ENCODE measurements at regions of chr18 and their contacts with region 1.

Region 1: DNA sequence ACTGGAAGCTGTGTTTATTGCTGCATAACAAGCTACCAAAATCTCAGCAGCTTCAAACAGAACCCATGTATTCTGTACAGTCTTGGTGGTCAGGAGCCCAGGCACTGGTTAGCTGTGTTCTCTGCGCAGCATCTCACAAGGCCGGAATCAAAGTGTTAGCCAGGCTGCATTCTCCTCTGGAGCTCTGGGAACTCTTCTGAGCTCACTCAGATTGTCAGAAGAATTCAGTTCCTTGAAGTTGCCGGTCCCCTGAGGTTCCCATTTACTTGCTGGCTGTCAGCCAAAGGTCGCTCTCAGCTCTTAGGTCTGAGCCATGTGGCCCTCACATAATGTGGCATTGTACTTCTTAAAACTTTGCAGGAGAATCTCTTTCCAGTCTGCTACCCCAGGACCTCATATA is 123.6 kb upstream of the SMIM21 start:
- DNase-seq: no peak
- ATAC-seq: no peak
- H3K4me3 ChIP-seq: no peak overlapping the region
- H3K27ac ChIP-seq: no peak overlapping the region
- H3K4me1 ChIP-seq: no peaks in the 10 kb centered on the region
- H3K27me3 ChIP-seq: peaks cover 0 to 2% of the 10 kb centered on the region in 2 donors

Region 2: DNA sequence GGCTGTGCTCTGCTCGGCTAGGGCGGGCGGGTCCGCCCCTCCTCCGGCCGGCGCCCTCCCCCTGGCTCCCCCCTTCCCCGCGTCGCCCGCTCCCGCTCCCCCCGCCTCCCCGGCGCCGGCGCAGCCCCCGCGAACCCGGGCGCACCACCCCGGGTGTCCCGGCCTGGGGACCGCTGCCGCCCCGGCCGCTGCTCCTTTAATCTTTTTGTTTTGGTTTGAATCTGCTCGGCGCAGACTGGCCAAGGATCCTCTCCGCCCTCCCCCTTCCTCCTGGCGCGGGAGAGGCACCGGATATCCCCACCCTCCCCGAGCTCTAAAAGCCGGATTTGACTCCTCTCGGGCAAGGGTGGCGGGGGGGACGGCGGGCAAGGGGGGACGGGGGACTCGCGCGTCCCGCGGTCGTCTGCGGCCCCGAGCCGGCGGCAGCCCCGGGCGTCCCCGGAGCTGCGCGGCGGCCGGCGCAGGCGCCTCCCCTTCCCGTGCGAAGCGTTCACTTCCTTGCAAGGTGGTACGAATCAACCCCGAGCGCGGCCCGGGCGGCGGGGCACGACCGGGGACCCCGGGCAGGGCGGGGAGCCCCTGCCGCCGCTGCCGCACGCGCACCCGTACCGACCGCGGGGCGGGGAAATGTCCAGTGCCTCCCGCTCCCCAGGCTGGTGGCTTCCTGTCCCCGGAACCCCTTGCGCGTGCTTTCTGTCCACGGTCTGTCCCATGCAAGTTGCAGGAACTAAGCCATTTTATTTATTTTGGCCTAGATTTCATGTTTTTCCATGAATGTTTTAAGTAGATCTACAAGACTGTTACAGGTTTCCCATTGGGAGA is 341.7 kb before region 1 on chr18 and contains the start of gene PTGR3:
- intact Hi-C with region 1: no loop called
- DNase-seq: peak; percentile 92
- ATAC-seq: peak; percentile 76
- H3K4me3 ChIP-seq: peak within 1 kb of the TSS; percentile 70 to 94
- H3K27ac ChIP-seq: peak within 1 kb of the TSS; percentile 81 to 98
- H3K4me1 ChIP-seq: peaks cover 0 to 4% of the 10 kb centered on the region in 2 donors
- H3K27me3 ChIP-seq: no peaks in the 10 kb centered on the region
- total RNA-seq, gene PTGR3: 16.9 to 28.6 TPM

Region 3: DNA sequence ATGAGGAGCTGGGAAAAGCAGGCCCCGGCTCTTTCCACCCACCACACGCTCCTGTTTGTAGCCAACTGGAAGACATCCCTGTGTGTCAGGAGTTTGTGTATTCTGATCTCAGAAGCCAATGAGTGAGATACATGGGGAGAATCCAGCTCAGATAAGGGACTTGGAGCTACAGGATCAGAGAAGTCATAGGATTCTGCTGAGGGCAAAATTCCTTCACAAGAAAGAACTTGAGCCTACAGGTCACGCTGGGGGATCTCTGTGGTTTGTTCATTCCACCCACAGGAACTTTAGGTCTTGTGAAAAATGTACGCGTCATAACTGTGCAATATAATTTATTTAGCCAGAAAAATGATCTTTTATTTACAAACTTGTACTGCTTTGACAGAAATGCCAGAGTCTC is 43.4 kb before region 1 on chr18:
- intact Hi-C with region 1: loop called in 1 of 2 experiments (anchors 2 kb)
- DNase-seq: no peak
- ATAC-seq: no peak
- H3K4me3 ChIP-seq: no peak overlapping the region
- H3K27ac ChIP-seq: no peak overlapping the region
- H3K4me1 ChIP-seq: no peaks in the 10 kb centered on the region
- H3K27me3 ChIP-seq: peaks cover 0 to 2% of the 10 kb centered on the region in 2 donors

Region 4: GRCh38 chr18:75592527-75592926 is 41.5 kb after region 1 on chr18:
- intact Hi-C with region 1: no loop called
- DNase-seq: no peak
- ATAC-seq: no peak
- H3K4me3 ChIP-seq: no peak overlapping the region
- H3K27ac ChIP-seq: no peak overlapping the region
- H3K4me1 ChIP-seq: no peaks in the 10 kb centered on the region
- H3K27me3 ChIP-seq: no peaks in the 10 kb centered on the region

Measured in aorta (tissue), 5 donors.